AG04450 (cell line): ENCODE measurements at regions of chr15 and their contacts with region 1.

Region 1: GRCh38 chr15:74382004-74382816 is 14.8 kb upstream of the CYP11A1 start:
- DNase-seq: no peak
- H3K4me3 ChIP-seq: no peak overlapping the region
- H3K27ac ChIP-seq: no peak overlapping the region
- H3K27me3 ChIP-seq: no peaks in the 10 kb centered on the region
- CTCF ChIP-seq: peak; percentile 98

Region 2: DNA sequence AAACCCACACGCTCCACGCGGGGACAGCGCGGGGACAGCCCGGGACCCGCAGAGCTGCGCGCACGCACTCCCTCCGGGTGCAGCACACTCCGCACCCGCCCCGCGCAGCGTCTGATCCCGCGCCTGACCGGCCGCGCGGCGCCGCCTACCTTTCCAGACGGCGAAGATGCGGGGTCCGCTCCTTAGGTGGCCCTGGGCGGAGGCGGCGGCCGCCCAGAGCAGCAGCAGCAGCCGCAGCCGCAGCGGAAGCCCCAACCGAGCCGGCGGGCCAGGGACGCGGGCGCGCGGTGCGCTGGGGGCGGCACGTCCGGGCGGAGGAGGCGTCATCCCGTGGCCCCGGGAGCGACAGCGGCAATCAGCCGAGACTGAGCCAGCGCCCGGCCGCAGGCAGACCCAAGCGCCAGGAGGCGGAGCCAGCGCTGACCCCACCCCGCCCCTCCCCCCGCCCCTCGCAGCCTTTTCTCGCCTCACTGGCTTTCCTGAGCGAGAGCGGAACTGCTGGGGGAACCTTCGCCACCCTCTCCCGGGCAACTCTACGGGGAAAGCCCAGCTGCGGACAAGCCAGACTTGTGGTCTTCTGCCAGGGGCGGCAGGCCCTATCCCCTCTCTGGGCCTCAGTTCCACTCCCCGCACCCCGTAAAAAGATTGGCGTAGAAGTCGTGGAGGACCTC is 51.5 kb after region 1 on chr15 and contains the start of gene SEMA7A:
- CTCF ChIA-PET with region 1: interaction called, 209 read pairs
- POLR2A ChIA-PET with region 1: interaction called, 3 read pairs
- DNase-seq: no peak
- H3K4me3 ChIP-seq: peak within 1 kb of the TSS; percentile 81
- H3K27ac ChIP-seq: peak within 1 kb of the TSS; percentile 68
- H3K27me3 ChIP-seq: no peaks in the 10 kb centered on the region
- CTCF ChIP-seq: no peak
- polyA plus RNA-seq, gene SEMA7A: 7.5 and 11.4 TPM in 2 replicates

Region 3: DNA sequence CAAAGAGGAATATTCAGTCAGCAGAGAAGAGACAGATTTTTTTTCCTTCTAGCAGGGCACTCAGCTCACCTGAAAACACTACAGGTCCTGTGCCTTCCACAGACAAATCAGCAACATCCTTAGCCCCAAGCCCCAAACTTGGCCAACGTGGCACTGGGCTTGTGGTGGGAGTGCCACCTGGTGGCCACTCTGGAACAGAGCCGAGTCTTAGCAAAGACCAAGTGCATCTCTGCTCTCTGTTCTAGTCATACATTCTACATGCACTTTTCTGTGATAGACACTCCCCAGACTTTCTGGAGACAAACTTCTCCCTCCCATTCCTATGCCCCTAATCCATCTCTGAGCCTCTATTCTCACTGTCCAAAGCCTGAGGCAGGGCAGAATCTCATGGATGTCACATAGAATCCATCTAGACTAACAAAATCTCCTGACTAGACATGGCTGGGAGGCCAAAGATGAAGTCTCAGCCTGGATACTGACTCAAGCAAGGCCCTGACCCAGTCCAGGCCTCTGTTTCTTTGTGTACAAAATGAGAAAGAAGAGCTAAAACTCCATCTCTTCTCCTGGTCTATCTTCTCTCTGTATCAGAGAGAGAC is 56.6 kb after region 1 on chr15:
- CTCF ChIA-PET with region 1: interaction called, 209 read pairs
- POLR2A ChIA-PET with region 1: interaction called, 7 read pairs
- DNase-seq: peak; percentile 55
- H3K4me3 ChIP-seq: no peak overlapping the region
- H3K27ac ChIP-seq: peak overlapping the region; percentile 31
- H3K27me3 ChIP-seq: no peaks in the 10 kb centered on the region
- CTCF ChIP-seq: peak; percentile 91

Region 4: DNA sequence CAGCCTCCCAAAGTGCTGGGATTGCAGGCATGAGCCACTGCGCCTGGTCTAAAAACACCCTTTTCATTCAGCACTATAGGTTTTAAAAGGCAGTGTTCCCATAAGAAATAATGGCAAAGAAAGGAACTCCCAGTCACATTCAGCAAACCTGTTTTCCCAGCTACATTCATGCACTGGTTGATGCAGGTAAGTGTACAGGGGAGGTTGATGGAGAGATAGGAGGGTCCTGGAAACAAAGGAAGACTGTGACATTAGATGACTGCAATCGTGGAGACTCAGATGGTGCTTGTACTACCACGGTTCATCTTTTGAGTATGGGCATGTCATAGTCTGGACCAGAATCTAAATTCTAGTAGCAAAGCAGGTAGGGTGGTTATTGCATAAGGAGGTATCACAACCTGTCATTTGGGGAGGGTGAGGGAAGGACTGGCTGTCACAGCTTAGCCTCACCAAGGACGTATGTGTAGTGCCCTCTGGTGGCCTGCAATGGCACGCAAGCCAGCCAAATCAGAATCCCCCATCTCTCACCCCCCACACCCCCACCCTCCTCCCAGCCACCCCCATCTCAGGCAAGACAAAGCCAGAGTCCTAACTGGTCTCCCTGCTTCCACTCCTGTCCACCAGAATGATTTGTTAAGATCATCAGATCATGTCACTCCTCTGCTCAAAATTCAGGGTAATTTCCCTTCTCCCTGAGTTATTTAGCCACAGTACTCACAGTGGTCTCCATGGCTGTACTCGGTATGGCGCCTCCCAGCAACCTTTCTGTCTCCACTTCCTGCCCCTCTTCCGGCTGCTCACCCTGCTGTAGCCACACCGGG is 107.5 kb after region 1 on chr15:
- CTCF ChIA-PET with region 1: interaction called, 10 read pairs
- POLR2A ChIA-PET with region 1: no interaction called
- DNase-seq: no peak
- H3K4me3 ChIP-seq: no peak overlapping the region
- H3K27ac ChIP-seq: no peak overlapping the region
- H3K27me3 ChIP-seq: no peaks in the 10 kb centered on the region
- CTCF ChIP-seq: peak; percentile 67

Region 5: GRCh38 chr15:74615508-74616365 is 233.5 kb after region 1 on chr15 and contains the start of gene CLK3:
- CTCF ChIA-PET with region 1: interaction called, 11 read pairs
- POLR2A ChIA-PET with region 1: no interaction called
- DNase-seq: peak; percentile 63
- H3K4me3 ChIP-seq: peak within 1 kb of the TSS; percentile 96
- H3K27ac ChIP-seq: peak within 1 kb of the TSS; percentile 89
- H3K27me3 ChIP-seq: peaks cover 8% of the 10 kb centered on the region
- CTCF ChIP-seq: no peak
- polyA plus RNA-seq, gene CLK3: 34.9 and 41.2 TPM in 2 replicates